ENCODE measurements at regions of chr9 and their contacts with region 1.

Region 1: DNA sequence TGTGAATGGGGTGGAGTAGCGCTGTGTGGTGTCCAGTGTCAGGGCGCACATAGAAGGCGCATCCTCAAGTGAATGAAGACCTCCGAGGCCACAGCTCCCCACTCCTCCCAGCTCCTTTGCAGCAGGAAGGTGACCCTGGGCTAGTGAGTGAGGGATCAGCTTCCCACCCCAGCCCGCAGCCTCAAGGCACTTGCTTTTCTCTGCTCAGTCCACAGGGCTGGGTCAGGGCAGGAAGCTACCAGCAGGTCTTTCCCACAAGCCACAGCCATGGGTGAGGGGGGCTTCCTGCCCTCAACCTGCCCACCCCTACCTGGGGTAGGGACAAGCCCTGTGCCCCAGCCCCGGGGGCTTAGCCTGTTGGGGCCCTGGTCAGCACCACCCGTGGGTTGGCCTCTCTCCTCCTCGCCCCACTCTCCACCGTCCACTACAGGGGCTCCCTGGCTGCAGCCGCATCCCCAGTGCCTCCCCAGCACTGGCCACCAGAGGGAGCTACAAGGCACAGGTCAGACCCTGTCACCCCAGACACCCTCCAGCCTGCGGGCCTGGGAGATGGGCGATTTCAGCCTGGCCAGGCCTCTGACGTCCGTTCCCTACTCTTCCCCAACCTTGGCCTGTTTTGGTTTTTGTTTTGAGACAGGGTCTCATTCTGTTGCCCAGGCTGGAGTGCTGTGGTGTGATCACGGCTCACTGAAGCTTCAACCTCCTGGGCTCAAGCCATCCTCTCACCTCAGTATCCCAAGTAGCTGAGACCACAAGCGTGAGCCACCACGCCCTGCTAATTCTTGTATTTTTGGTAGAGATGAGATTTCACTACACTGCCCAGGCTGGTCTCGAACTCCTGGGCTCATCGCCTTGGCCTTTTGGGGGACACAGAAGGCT is 1.3 kb upstream of the ABCA2 start:
- DNase-seq: peak; percentile 75

Region 2: GRCh38 chr9:136949817-136950655 is 79.3 kb before region 1 on chr9:
- CTCF ChIA-PET with region 1: interaction called, 45 read pairs
- POLR2A ChIA-PET with region 1: interaction called, 4 read pairs
- DNase-seq: peak; percentile 98

Region 3: DNA sequence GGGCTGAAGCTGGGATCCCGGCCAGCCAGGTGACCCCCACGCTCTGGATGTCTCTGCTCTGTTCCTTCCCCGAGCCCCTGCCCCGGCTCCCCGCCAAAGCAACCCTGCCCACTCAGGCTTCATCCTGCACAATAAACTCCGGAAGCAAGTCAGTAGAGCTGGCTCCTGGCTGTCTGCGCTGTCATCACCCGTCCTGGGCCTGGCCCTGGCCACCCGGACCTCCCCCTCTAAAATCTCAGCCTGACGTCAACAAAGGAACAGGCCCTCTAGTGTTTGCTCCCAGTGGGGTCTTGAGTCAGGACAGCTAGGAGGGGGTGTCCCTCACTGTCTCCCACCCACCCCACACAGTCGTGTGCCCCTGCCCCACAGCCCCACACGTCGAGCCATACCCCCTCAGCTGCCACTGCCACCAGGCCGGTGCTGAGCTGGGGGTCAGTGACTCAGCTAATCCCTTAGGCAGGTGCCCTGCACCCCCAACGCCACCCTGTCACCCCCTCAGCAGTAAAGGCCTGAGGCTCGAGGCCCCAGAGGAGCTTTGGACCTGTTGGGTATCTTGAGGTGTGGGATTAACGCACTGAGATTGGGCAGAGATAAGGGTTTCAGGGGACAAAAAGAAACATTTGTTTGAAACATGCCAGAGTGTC is 47.6 kb before region 1 on chr9:
- CTCF ChIA-PET with region 1: no interaction called
- POLR2A ChIA-PET with region 1: no interaction called
- DNase-seq: no peak

Region 4: DNA sequence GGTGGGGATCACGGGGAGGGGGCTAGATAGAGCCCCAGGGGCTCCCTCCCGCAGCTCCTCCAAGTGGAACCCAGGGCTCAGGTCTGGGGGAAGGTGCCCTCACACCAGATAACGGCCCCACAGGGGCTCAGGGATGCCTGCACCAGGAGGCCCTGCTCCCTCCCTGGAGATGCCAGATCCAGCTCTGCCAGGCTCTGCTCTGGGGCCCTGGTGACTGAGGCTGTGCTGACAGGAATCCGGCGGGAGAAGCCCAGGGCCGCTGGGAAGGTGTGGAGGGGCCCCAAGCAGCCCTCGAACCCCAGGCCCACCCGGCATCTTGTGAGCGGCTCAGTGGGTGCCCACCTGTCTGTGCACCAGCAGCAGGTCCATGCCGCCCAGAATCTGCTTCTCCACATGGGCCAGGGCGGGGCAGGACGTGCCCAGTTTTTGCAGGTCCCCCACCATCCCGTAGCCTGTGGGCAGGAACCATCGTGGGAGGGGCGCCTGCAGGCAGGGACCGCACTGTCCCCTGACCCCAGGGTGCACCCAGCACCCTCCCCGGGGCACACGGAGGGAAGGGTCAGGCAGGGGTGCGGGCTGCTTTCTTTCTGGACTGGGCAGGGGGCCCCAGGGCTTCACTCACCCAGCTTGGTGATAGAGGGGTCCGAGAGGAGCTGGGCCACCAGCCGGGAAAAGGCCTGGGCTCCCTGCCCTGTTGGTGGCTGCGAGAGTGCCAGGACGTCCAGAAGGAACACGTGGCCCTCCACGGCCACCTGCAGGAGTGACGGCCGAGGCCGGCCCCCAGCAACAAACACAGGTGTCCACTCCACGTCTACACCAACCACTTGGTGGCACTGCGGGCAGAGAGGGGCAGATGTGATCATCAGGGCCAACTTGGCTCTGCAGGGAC is 321.6 kb after region 1 on chr9:
- CTCF ChIA-PET with region 1: no interaction called
- POLR2A ChIA-PET with region 1: no interaction called
- DNase-seq: no peak

Measured in HEK293T (cell line).